Mammary epithelial cell (primary cell): ENCODE measurements at regions of chr10 and their contacts with region 1.

Region 1: DNA sequence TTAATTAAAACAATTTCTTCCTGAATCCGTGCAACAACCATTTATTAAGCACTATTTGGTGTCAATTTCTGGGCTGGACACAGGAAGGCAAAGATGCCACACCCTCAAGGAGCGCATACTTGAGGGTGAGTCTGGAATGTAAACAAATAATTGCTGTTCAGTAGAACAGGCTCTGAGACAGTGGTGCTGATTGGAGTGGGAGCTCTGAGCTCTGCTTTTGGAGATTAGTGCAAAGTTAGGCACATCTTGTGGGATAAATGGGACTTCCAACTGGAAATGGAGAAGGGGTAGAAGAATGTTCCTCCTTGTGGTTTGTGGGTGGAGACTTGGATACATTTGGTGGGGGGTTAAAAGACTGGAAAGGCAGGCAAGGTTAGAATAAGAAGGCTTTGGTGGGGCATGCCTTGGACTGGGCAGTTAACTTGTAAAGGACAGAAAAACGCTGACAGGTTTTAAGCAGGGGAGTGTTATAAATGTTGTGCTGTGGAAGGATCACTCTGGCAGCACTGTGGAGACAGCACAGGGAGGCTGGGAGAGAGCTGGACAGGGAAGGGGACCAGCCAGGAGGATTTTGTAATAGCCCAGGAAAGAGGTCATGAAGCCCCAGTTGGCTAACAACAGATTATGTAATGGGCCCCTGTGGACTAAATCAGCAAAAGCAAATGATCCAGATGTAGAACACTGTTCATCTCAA is 80.7 kb downstream of the ZNF365 start:
- DNase-seq: peak; percentile 60
- H3K4me3 ChIP-seq: no peak overlapping the region
- H3K27ac ChIP-seq: peak overlapping the region; percentile 74
- H3K4me1 ChIP-seq: peaks cover 38% of the 10 kb centered on the region
- H3K27me3 ChIP-seq: no peaks in the 10 kb centered on the region
- CTCF ChIP-seq: no peak

Region 2: DNA sequence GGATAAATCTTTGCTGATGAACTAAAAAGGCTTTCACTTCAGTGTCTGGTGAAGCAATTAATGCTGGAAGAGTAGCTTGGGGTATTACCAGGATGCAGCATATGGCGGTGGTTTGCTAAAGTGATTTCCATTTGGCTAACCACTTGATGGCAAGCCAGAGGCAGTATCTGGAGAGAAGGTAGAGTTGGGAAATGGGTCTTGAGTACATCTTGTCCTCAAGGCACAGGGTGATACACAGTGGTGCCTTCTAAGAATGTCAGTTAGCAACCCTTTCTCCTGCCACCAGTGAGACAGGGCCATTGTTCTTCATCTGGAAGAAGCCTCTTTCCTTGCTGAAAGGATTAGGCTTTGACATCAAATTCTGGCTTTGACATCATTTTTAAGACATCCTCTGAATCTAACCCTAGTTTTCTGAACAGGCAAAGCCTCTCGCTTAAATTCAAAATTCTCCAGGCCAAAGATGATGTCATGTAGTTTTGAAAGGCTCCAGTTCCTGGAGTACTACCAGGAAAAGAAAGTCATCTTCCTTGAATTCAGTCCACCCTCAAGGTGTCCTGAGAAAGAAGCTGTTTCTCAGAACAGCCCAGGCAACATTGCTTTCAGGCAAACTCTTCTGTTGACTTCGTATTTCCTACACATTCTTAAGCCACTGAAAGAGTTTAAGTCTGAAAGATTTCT is 390.9 kb before region 1 on chr10:
- CTCF ChIA-PET with region 1: no interaction called
- dilution Hi-C with region 1: no loop called
- in situ Hi-C with region 1: no loop called
- intact Hi-C with region 1: no loop called
- DNase-seq: no peak
- H3K4me3 ChIP-seq: no peak overlapping the region
- H3K27ac ChIP-seq: no peak overlapping the region
- H3K4me1 ChIP-seq: no peaks in the 10 kb centered on the region
- H3K27me3 ChIP-seq: no peaks in the 10 kb centered on the region
- CTCF ChIP-seq: no peak

Region 3: GRCh38 chr10:62492012-62492869 is 37.4 kb after region 1 on chr10:
- CTCF ChIA-PET with region 1: no interaction called
- dilution Hi-C with region 1: no loop called
- in situ Hi-C with region 1: no loop called
- intact Hi-C with region 1: loop called (anchors 5 kb)
- DNase-seq: peak; percentile 72
- H3K4me3 ChIP-seq: no peak overlapping the region
- H3K27ac ChIP-seq: peak overlapping the region; percentile 55
- H3K4me1 ChIP-seq: peaks cover 10% of the 10 kb centered on the region
- H3K27me3 ChIP-seq: no peaks in the 10 kb centered on the region
- CTCF ChIP-seq: peak; percentile 80 to 87

Region 4: GRCh38 chr10:62779487-62780248 is 324.8 kb after region 1 on chr10:
- CTCF ChIA-PET with region 1: no interaction called
- dilution Hi-C with region 1: no loop called
- in situ Hi-C with region 1: no loop called
- intact Hi-C with region 1: no loop called
- DNase-seq: peak; percentile 80
- H3K4me3 ChIP-seq: no peak overlapping the region
- H3K27ac ChIP-seq: no peak overlapping the region
- H3K4me1 ChIP-seq: peaks cover 7% of the 10 kb centered on the region
- H3K27me3 ChIP-seq: no peaks in the 10 kb centered on the region
- CTCF ChIP-seq: no peak